ENCODE measurements at regions of chr15 and their contacts with region 1.

Region 1: GRCh38 chr15:59751552-59752413 is 62.7 kb upstream of the BNIP2 start:
- DNase-seq: peak; percentile 54
- H3K4me3 Mint-ChIP-seq: no peak overlapping the region
- H3K27ac Mint-ChIP-seq: no peak overlapping the region
- H3K4me1 Mint-ChIP-seq: no peaks in the 10 kb centered on the region
- H3K27me3 Mint-ChIP-seq: peaks cover 13% of the 10 kb centered on the region
- CTCF ChIP-seq: peak; percentile 73

Region 2: DNA sequence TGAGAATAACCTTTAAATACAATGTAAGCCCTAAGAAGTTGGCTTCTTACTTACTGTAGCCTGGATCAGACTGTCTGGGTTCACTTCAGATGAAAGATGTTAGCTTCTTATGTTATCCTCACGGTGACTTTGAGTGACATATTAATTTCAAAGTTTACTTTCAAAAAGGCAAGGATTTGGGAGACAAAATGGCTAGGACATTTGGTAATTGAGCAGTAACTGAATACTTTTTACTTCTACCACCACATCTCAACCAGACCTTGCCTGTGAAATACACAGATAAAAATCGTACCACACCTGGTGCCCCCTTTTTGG is 26.7 kb before region 1 on chr15:
- CTCF ChIA-PET with region 1: interaction called, 25 read pairs
- POLR2A ChIA-PET with region 1: no interaction called
- intact Hi-C with region 1: no loop called
- DNase-seq: no peak
- H3K4me3 Mint-ChIP-seq: no peak overlapping the region
- H3K27ac Mint-ChIP-seq: no peak overlapping the region
- H3K4me1 Mint-ChIP-seq: no peaks in the 10 kb centered on the region
- H3K27me3 Mint-ChIP-seq: peaks cover 13% of the 10 kb centered on the region
- CTCF ChIP-seq: no peak

Region 3: GRCh38 chr15:59741274-59741906 is 10.4 kb before region 1 on chr15:
- CTCF ChIA-PET with region 1: interaction called, 18 read pairs
- POLR2A ChIA-PET with region 1: interaction called, 3 read pairs
- intact Hi-C with region 1: no loop called
- DNase-seq: peak; percentile 57
- H3K4me3 Mint-ChIP-seq: no peak overlapping the region
- H3K27ac Mint-ChIP-seq: no peak overlapping the region
- H3K4me1 Mint-ChIP-seq: no peaks in the 10 kb centered on the region
- H3K27me3 Mint-ChIP-seq: no peaks in the 10 kb centered on the region
- CTCF ChIP-seq: peak; percentile 43

Region 4: DNA sequence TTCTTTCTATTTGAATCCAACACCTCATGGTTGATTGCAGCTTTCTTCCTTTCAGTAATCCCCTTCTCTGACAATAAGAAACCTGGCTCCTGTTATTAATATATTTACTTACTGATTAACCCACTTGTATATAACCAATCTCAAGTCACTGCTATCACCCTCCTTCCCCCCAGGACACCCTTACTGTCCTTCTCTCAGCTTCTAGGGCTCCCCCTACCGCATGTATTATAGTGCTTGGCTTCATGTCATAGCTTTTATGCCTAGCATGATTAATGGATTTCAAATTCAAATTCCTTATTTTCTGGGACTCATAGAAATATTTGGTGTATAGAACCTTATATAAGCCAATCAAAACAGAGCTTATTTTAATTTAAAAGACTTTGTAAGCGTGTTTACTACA is 13.0 kb after region 1 on chr15:
- CTCF ChIA-PET with region 1: interaction called, 14 read pairs
- POLR2A ChIA-PET with region 1: no interaction called
- intact Hi-C with region 1: no loop called
- DNase-seq: peak; percentile 21
- H3K4me3 Mint-ChIP-seq: no peak overlapping the region
- H3K27ac Mint-ChIP-seq: no peak overlapping the region
- H3K4me1 Mint-ChIP-seq: no peaks in the 10 kb centered on the region
- H3K27me3 Mint-ChIP-seq: no peaks in the 10 kb centered on the region
- CTCF ChIP-seq: no peak

Region 5: GRCh38 chr15:60128000-60128376 is 376.2 kb after region 1 on chr15:
- CTCF ChIA-PET with region 1: interaction called, 7 read pairs
- POLR2A ChIA-PET with region 1: interaction called, 3 read pairs
- intact Hi-C with region 1: loop called (anchors 1 kb)
- DNase-seq: no peak
- H3K4me3 Mint-ChIP-seq: peak overlapping the region; percentile 85
- H3K27ac Mint-ChIP-seq: peak overlapping the region; percentile 94
- H3K4me1 Mint-ChIP-seq: peaks cover 18% of the 10 kb centered on the region
- H3K27me3 Mint-ChIP-seq: no peaks in the 10 kb centered on the region
- CTCF ChIP-seq: no peak